Mammary epithelial cell (primary cell): ENCODE measurements at regions of chr3 and their contacts with region 1.

Region 1: GRCh38 chr3:99482191-99482590 is 156.2 kb upstream of the COL8A1 start:
- DNase-seq: no peak
- H3K4me3 ChIP-seq: no peak overlapping the region
- H3K27ac ChIP-seq: no peak overlapping the region
- H3K4me1 ChIP-seq: no peaks in the 10 kb centered on the region
- H3K27me3 ChIP-seq: no peaks in the 10 kb centered on the region
- CTCF ChIP-seq: no peak

Region 2: DNA sequence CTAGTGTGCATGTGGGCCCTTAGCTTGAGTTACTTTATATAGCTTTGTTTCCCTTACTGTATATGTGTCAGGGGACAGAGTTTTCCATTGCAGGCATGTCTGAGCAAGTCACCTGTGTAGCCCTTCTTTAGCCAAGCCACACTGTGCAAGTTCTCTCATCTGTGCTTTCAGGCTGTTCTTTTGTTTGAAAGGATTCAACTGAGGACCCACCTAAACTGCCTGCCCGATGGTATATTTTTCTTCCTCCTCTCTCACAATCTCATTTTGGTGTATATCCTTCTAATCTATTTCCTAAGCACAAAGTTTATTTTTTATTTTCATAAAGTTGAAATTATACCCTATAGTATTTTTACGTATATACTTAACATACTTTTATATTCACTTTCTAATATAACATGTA is 1977.7 kb before region 1 on chr3:
- CTCF ChIA-PET with region 1: interaction called, 41 read pairs
- dilution Hi-C with region 1: no loop called
- in situ Hi-C with region 1: no loop called
- intact Hi-C with region 1: no loop called
- DNase-seq: no peak
- H3K4me3 ChIP-seq: no peak overlapping the region
- H3K27ac ChIP-seq: no peak overlapping the region
- H3K4me1 ChIP-seq: no peaks in the 10 kb centered on the region
- H3K27me3 ChIP-seq: no peaks in the 10 kb centered on the region
- CTCF ChIP-seq: no peak